ENCODE measurements at regions of chr16 and their contacts with region 1.

Region 1: DNA sequence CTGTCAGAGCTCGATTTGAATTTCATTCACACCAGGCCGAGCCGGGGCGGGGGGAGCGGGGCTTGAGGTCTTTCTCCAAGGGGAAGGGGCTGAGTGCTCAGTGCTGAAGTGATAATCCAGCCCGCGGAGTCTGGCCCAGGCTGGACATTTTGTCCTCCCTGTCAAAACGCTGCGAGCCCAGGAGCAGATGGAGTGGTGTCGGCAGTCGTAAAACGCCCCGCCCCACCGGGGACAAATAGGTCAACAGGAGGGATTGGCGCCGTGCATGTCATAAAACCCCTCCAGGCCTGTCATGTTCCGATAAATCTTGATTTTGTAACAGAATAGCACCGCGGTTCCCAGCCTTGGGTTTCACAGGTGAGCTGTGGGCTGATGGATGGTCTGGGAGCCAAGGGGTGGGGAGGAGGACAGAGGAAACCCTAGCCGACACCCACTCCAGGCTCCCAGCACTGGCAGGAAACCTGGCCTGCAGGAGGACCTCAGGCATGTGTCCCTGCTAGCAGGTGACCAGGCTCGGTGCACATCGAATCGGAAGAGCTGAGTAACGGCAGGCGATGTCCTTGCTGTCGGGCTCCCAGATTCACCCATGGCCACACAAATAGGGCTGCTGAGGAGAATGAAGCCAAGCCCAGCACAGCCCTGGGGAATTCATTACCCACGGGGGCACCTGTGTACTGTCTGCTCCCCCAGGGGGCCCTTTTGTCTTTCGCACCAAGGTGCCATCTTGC is 341.4 kb downstream of the FOXL1 start:
- DNase-seq: peak; percentile 72

Region 2: DNA sequence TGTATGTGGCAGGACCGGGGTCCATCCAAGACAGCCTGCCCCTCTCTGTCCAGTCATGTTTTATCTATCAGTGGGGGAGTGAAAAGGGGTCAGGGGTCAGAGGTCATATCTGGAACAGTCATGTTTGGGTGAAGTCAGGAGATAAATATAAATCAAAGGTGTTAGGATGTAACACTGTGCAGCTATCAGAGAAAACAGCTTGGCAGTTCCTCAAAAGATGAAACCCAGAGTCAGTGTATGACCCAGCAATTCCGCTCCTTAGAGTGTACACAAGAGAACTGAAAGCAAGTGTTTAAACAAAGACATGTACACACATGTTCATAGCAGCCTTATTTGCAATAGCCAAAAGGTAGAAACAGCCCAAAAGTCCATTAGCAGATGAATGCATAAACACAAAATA is 19.9 kb after region 1 on chr16:
- intact Hi-C with region 1: loop called in 1 of 2 experiments (anchors 1 kb)
- DNase-seq: no peak

Region 3: DNA sequence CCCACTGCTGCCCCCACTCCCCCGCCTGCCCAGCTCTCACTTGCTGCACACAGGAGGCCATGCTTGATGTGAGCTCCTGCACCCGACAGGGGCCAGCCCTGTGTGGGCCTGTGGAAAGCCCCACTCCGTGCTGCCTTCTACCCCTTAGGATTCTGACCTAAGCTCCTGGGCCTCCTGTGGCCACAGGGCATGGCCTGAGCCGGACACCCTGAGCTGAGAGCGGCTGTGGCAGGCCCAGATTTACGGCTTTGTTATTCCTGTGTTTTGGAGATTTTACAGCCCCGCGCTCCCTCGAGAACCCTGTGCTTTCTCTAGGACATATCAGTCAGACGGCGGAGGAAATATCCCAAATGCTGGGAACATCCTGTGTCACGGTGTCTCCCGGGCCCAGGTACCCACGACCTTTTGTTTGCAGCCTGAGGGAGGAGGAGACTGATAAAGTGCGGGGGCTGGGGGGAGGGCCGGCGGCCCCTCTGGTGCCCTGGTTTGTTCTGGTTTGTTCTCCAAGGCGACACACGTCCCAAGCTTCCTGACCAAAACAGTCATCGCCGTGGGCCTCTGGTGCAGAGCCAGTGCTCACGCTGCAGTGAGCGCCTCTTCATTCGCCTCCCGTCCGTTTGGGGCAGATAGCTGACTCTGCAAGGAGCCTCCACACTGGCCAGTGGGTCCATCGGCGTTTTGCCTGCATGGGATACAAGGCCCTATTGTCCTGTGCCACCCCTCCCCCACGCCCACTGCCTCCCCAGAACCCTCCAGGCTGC is 34.1 kb after region 1 on chr16:
- intact Hi-C with region 1: loop called in 1 of 2 experiments (anchors 1 kb)
- DNase-seq: no peak

Region 4: DNA sequence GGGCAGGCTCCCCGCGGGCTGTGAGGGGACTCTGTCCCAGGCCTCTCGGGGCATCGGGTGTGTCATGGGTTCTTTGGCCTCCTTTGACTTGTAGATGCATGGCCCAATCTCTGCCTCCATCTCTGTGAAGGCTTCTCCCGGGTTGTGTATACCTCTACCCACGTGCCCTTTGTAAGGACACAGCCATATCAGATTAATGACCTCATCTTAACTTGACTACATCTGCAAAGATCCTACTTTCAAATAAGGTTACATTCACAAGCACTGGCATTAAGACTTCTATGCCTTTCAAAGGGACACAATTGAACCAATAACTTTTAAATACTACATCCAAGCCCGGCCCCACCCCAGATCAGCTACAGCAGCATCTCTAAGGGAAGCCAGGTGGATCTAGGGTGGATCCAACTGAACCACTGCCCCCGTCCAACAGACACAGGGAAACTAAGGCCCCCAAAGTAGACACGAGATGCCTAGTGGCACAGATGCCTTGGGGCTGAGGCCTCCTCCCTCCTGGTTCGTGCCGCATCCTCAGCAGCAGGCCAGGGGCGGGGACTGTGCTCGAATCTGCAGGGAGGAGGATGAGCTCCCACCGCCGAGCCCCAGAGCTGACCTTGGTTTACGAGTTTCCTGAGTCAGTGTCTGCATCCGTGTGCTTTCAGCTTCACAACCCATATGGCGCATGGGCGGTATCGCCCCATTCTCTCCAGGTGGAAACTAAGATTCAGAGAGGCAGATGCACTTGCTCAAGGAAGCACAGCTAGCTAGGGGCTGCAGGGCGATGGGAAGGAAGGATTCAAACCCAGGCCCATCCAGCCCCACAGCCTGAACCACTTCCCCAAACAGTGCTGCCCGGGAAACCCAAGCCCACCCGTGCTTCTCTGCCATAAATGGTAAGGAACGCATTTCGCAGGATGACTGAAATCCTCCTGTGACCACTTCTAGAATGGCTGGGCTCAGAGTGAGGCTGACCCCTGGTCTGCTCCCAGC is 44.1 kb after region 1 on chr16:
- intact Hi-C with region 1: no loop called
- DNase-seq: no peak

Region 5: DNA sequence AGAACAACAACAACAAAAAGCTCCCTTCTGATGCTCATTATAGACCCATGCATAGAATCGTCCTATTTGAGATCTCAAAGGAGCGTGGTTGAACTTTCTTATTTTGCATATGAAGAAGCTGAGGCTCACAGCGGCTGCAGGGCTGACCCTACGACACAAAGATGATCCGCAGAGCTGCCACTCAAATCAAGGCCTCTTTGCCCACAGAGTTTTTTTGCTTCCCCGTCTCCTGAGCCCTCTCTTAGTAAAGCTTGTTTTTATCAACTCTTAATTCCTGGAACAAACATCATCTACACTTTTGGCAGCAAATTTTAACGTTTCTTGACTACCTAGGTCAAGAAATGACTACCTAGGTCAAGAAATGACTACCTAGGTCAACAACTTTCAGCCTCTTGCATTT is 323.7 kb after region 1 on chr16:
- intact Hi-C with region 1: loop called in 1 of 2 experiments (anchors 2 kb)
- DNase-seq: no peak

Measured in posterior vena cava (tissue), 2 donors.